Activated B cell treated with CpG ODN at 0.5 μM for 24 hours (primary cell): ENCODE measurements at regions of chr16 and their contacts with region 1.

Region 1: GRCh38 chr16:58755989-58756649 is 22.0 kb upstream of the GOT2 start:
- DNase-seq: peak; percentile 52
- ATAC-seq: peak; percentile 99
- H3K4me3 Mint-ChIP-seq: peak overlapping the region; percentile 59
- H3K27ac Mint-ChIP-seq: peak overlapping the region; percentile 1
- H3K4me1 Mint-ChIP-seq: peaks cover 8% of the 10 kb centered on the region
- H3K27me3 Mint-ChIP-seq: no peaks in the 10 kb centered on the region
- CTCF ChIP-seq: no peak

Region 2: DNA sequence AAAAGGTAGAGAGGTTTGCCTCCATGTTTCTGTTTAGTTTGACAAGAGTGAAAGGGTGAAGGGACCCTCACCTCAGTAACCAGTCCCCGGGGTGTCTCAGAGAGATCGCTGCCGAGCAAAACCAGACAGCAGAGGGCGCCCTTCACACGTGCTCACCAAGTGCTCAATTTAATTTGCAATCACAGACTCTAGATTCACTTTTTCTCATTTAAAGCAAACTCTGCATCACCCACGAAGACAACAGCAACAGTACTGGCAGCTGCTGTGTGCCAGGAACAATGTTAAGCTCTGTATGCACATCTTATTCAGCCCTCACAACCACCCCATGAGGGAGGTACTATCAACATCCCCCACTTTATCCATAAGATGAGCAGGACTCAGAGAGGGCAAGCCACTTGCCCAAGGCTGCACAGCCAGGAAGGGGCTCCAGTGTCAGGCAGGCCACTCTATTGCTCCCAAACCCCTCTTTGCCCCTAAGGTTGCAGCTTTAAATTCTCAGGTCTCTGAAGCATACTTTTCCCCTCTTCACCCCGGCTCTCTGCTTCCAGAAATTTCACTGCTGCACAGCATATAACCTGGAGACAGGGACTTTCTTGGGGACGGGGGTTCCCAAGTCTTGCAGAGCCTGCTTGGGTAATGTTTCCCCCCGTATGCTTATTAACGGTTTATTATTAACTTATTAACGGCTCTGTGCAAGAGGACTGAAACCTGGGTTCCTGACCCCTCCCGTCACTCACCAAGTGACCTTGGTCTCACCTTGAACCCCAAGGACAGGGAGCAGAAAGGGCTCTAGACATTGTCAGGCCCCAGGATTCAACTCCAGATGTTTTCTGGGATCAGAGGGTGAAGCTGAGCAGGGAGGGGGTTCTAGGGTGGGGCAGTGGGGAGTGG is 856.1 kb before region 1 on chr16:
- CTCF ChIA-PET with region 1: no interaction called
- POLR2A ChIA-PET with region 1: no interaction called
- intact Hi-C with region 1: loop called (anchors 10 kb)
- DNase-seq: peak; percentile 48
- ATAC-seq: peak; percentile 68
- H3K4me3 Mint-ChIP-seq: no peak overlapping the region
- H3K27ac Mint-ChIP-seq: no peak overlapping the region
- H3K4me1 Mint-ChIP-seq: no peaks in the 10 kb centered on the region
- H3K27me3 Mint-ChIP-seq: peaks cover 23% of the 10 kb centered on the region
- CTCF ChIP-seq: no peak

Region 3: GRCh38 chr16:58336332-58337089 is 419.6 kb before region 1 on chr16:
- CTCF ChIA-PET with region 1: interaction called, 47 read pairs
- POLR2A ChIA-PET with region 1: no interaction called
- intact Hi-C with region 1: no loop called
- DNase-seq: peak; percentile 77
- ATAC-seq: peak; percentile 93
- H3K4me3 Mint-ChIP-seq: peak overlapping the region; percentile 60
- H3K27ac Mint-ChIP-seq: no peak overlapping the region
- H3K4me1 Mint-ChIP-seq: peaks cover 6% of the 10 kb centered on the region
- H3K27me3 Mint-ChIP-seq: no peaks in the 10 kb centered on the region
- CTCF ChIP-seq: peak; percentile 96

Region 4: DNA sequence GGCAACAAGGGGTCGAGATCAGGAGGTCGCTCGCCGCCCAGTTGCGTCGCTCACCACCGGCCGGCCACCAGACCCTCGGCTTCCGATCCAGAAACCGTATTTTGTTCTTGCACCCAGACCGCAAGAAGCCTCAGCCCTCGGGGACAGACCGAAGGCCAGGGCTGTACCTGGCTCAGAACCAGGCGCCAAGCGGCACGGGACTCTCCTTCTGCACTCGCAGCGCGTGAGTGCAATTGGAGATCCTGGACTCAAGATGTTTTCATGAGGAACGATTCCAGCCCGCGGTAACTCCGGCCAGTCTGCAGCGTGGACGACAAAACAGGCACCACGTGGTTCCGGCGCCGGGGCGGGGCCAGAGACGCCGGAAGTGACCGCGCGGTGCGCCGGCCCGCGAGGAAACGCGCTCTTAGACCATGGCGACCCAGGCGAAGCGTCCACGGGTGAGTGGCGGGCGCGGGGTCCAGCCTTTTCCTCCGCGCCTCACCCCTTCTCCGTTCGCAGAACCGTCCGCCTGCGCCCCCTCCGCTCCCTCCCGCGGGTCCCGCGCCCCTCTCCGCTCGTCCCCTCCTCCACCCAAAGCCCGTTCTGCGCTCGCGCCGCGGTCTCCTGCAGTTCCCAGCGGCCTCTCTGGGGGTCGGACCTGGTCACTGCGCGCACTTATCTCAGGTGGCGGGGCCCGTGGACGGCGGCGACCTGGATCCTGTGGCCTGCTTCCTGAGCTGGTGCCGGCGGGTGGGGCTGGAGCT is 240.8 kb before region 1 on chr16 and contains the start of gene SETD6:
- CTCF ChIA-PET with region 1: interaction called, 37 read pairs
- POLR2A ChIA-PET with region 1: no interaction called
- intact Hi-C with region 1: loop called (anchors 1 kb)
- DNase-seq: peak; percentile 81
- ATAC-seq: peak; percentile 77
- H3K4me3 Mint-ChIP-seq: peak within 1 kb of the TSS; percentile 91
- H3K27ac Mint-ChIP-seq: peak within 1 kb of the TSS; percentile 84
- H3K4me1 Mint-ChIP-seq: peaks cover 24% of the 10 kb centered on the region
- H3K27me3 Mint-ChIP-seq: no peaks in the 10 kb centered on the region
- CTCF ChIP-seq: no peak
- total RNA-seq, gene SETD6: 25.6 and 31.1 TPM in 2 replicates

Region 5: GRCh38 chr16:58733671-58734458 is 22.3 kb before region 1 on chr16 and contains the start of gene GOT2:
- CTCF ChIA-PET with region 1: interaction called, 10 read pairs
- POLR2A ChIA-PET with region 1: no interaction called
- intact Hi-C with region 1: loop called (anchors 1 kb)
- DNase-seq: peak; percentile 77
- ATAC-seq: peak; percentile 95
- H3K4me3 Mint-ChIP-seq: peak within 1 kb of the TSS; percentile 98
- H3K27ac Mint-ChIP-seq: peak within 1 kb of the TSS; percentile 62
- H3K4me1 Mint-ChIP-seq: peaks cover 36% of the 10 kb centered on the region
- H3K27me3 Mint-ChIP-seq: no peaks in the 10 kb centered on the region
- CTCF ChIP-seq: no peak
- total RNA-seq, gene GOT2: 53.6 and 59.2 TPM in 2 replicates